Right lobe of liver (tissue), 6 donors: ENCODE measurements at regions of chrX and their contacts with region 1.

Region 1: DNA sequence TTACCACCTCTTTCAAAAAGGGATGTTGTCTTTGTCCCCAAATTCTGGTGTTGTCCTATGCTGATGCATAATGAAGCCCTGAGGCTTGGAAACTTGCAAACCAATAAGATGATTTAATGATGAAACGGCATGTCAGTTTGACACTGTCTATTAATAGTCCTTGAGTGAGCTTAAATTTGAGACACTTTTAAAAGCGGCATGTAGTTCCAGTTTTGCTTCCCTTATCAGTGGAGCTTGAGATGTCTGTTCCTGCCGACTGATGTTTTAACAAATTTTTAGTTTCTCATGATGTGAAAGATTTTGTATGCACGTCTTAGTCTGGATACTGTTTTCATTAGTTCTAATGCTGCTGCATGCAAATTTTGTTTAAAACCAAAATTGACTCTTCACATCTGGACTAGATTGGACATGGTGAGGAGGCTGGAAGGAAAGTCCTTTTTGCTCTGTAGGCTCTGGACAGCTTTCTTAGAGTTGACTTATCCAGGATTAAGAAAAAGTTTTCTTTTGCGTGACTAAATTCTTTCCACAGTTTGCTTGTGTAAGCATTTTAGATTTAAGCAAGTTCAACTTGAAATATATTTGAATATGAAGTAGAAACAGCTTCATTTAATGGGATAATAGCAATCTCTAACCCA is 11.7 kb downstream of the C1GALT1C1 start:
- DNase-seq: no peak
- ATAC-seq: no peak
- H3K4me3 ChIP-seq: no peak overlapping the region
- H3K27ac ChIP-seq: no peak overlapping the region
- H3K4me1 ChIP-seq: no peaks in the 10 kb centered on the region
- H3K27me3 ChIP-seq: no peaks in the 10 kb centered on the region
- CTCF ChIP-seq: no peak
- POLR2A ChIP-seq: no peak

Region 2: DNA sequence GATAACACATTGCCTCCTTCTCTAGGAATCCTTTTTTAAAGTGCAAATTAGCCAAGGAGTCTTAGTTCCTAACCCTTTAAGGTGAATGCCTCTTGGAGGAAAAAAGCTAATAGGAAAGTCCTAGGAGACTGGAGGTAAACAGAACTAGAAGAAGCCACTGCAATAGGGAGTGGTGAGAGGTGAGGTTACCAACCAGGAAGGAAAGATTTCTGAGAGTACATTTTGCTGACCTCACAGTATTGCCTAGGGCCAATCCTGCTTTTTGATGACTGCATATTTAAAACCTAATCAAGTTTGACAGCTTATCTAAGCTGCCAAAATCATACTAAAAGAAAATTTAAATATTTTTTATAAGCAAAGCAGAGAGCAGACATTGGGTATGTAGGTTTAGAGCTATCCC is 50.1 kb before region 1 on chrX:
- intact Hi-C with region 1: loop called in 1 of 2 experiments (anchors 5 kb)
- DNase-seq: no peak
- ATAC-seq: peak in 1 of 4 donors; percentile 64
- H3K4me3 ChIP-seq: no peak overlapping the region
- H3K27ac ChIP-seq: no peak overlapping the region
- H3K4me1 ChIP-seq: no peaks in the 10 kb centered on the region
- H3K27me3 ChIP-seq: no peaks in the 10 kb centered on the region
- CTCF ChIP-seq: no peak
- POLR2A ChIP-seq: no peak

Region 3: GRCh38 chrX:120690344-120690743 is 72.2 kb after region 1 on chrX:
- intact Hi-C with region 1: no loop called
- DNase-seq: no peak
- ATAC-seq: no peak
- H3K4me3 ChIP-seq: no peak overlapping the region
- H3K27ac ChIP-seq: no peak overlapping the region
- H3K4me1 ChIP-seq: no peaks in the 10 kb centered on the region
- H3K27me3 ChIP-seq: no peaks in the 10 kb centered on the region
- CTCF ChIP-seq: no peak
- POLR2A ChIP-seq: no peak

Region 4: GRCh38 chrX:120718969-120719368 is 100.9 kb after region 1 on chrX:
- intact Hi-C with region 1: no loop called
- DNase-seq: no peak
- ATAC-seq: no peak
- H3K4me3 ChIP-seq: no peak overlapping the region
- H3K27ac ChIP-seq: no peak overlapping the region
- H3K4me1 ChIP-seq: no peaks in the 10 kb centered on the region
- H3K27me3 ChIP-seq: no peaks in the 10 kb centered on the region
- CTCF ChIP-seq: no peak
- POLR2A ChIP-seq: no peak